H1 (cell line): ENCODE measurements at regions of chr6 and their contacts with region 1.

Region 1: DNA sequence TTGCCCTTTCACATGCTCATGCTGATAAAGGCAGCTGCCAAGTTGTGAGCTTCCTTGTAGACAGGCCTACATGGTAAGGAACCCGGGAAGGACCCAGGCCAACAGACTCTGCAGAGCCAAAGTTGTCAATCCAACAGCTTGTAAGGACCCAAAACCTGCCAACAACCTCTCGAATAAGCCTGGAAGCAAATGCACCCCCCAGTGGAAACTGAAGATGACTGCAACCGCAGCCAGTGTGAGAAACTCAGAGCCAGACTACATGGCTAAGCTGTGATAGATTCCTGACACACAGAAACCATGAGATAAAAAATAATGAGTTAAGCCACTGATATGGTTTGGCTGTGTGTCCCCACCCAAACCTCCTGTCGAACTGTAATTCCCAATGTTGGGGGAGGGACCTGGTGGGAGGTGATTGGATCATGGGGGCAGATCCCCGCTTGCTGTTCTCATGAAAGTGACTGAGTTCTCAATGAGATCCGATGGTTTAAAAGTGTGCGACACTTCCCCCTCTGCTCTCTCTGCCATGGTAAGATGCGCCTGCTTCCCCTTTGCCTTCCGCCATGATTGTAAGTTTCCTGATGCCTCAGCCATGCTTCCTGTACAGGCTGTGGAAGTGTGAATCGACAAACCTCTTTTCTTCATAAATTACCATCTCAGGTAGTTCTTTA is 18.8 kb upstream of the CLPSL2 start:
- DNase-seq: no peak
- H3K4me3 ChIP-seq: no peak overlapping the region
- H3K27ac ChIP-seq: no peak overlapping the region
- H3K4me1 ChIP-seq: peaks cover 5 to 18% (median 12%) of the 10 kb centered on the region in 4 experiments
- H3K27me3 ChIP-seq: no peaks in the 10 kb centered on the region
- CTCF ChIP-seq: peak; percentile 64 to 78 (median 71)
- EP300 ChIP-seq: no peak
- POLR2A ChIP-seq: no peak
- RAD21 ChIP-seq: peak; percentile 67 to 83

Region 2: GRCh38 chr6:35710241-35710847 is 47.2 kb before region 1 on chr6:
- CTCF ChIA-PET with region 1: no interaction called
- POLR2A ChIA-PET with region 1: no interaction called
- DNase-seq: peak in 1 of 2 experiments; percentile 16
- H3K4me3 ChIP-seq: no peak overlapping the region
- H3K27ac ChIP-seq: no peak overlapping the region
- H3K4me1 ChIP-seq: no peaks in the 10 kb centered on the region
- H3K27me3 ChIP-seq: no peaks in the 10 kb centered on the region
- CTCF ChIP-seq: no peak
- EP300 ChIP-seq: no peak
- POLR2A ChIP-seq: no peak
- RAD21 ChIP-seq: no peak

Region 3: GRCh38 chr6:35737413-35738211 is 20.0 kb before region 1 on chr6:
- CTCF ChIA-PET with region 1: interaction called, 137 read pairs
- POLR2A ChIA-PET with region 1: interaction called, 84 read pairs
- DNase-seq: no peak
- H3K4me3 ChIP-seq: no peak overlapping the region
- H3K27ac ChIP-seq: no peak overlapping the region
- H3K4me1 ChIP-seq: peaks cover 4 to 38% (median 24%) of the 10 kb centered on the region in 4 experiments
- H3K27me3 ChIP-seq: no peaks in the 10 kb centered on the region
- CTCF ChIP-seq: peak in 2 of 3 experiments; percentile 4 to 44; a peak in 2 of 4 replicates
- EP300 ChIP-seq: no peak
- POLR2A ChIP-seq: no peak
- RAD21 ChIP-seq: peak; percentile 44 to 53; a peak in 3 of 4 replicates

Region 4: GRCh38 chr6:35893246-35893645 is 135.7 kb after region 1 on chr6:
- CTCF ChIA-PET with region 1: no interaction called
- POLR2A ChIA-PET with region 1: no interaction called
- DNase-seq: no peak
- H3K4me3 ChIP-seq: no peak overlapping the region
- H3K27ac ChIP-seq: no peak overlapping the region
- H3K4me1 ChIP-seq: peaks cover 0 to 6% (median 3%) of the 10 kb centered on the region in 4 experiments; a peak in 2 of 7 replicates
- H3K27me3 ChIP-seq: no peaks in the 10 kb centered on the region
- CTCF ChIP-seq: no peak
- EP300 ChIP-seq: no peak
- POLR2A ChIP-seq: no peak
- RAD21 ChIP-seq: no peak